Body of pancreas (tissue), 4 donors: ENCODE measurements at regions of chr12 and their contacts with region 1.

Region 1: GRCh38 chr12:95918194-95918993 is 24.0 kb downstream of the CCDC38 start:
- DNase-seq: peak; percentile 34 to 65 (median 53)
- ATAC-seq: peak; percentile 78
- H3K4me3 ChIP-seq: no peak overlapping the region
- H3K27ac ChIP-seq: no peak overlapping the region
- H3K4me1 ChIP-seq: no peaks in the 10 kb centered on the region
- H3K27me3 ChIP-seq: no peaks in the 10 kb centered on the region
- CTCF ChIP-seq: peak; percentile 42 to 89 (median 79)
- POLR2A ChIP-seq: no peak

Region 2: DNA sequence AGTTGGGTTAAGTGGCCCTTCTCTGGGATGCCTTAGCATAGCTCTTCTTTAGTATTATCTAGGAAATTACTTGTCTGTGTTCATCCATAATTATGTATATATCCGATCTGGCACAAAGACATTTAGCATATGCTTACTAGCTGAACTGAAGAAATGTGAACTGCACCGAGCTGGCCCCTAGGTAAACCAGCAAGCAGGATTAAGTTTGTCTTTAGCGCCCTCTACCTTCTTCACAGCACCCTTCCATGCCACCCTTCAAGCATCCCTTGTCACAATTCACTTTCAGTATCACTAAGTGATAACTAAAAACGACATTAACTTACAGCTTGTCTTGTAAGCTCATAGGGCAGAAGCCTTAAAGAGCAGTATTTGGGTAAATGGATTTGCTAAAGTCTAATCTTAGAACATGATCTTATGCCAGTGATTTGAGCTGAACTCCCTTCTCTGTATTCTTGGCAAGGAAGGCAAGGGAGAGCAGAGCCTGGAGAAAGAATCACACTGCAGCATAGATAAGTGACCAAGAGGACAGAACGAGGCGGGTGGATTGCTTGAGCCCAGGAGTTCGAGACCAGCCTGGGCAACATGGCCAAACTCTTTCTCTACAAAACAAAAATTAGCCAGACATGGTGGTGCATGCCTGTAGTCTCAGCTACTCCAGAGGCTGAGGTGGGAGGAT is 80.4 kb after region 1 on chr12:
- intact Hi-C with region 1: loop called (anchors 10 kb)
- DNase-seq: peak; percentile 41 to 74 (median 62)
- ATAC-seq: peak; percentile 74
- H3K4me3 ChIP-seq: no peak overlapping the region
- H3K27ac ChIP-seq: no peak overlapping the region
- H3K4me1 ChIP-seq: peaks cover 6% of the 10 kb centered on the region
- H3K27me3 ChIP-seq: no peaks in the 10 kb centered on the region
- CTCF ChIP-seq: peak; percentile 55 to 82 (median 75)
- POLR2A ChIP-seq: no peak

Region 3: GRCh38 chr12:96070670-96071279 is 152.4 kb after region 1 on chr12:
- intact Hi-C with region 1: no loop called
- DNase-seq: no peak
- ATAC-seq: no peak
- H3K4me3 ChIP-seq: no peak overlapping the region
- H3K27ac ChIP-seq: no peak overlapping the region
- H3K4me1 ChIP-seq: no peaks in the 10 kb centered on the region
- H3K27me3 ChIP-seq: no peaks in the 10 kb centered on the region
- CTCF ChIP-seq: peak in 1 of 7 experiments; percentile 8
- POLR2A ChIP-seq: no peak